Activated CD4-positive, alpha-beta memory T cell treated with anti-CD3 and anti-CD28 coated beads, Interleukin-2, amount 10 ng/mL, durations not matched to agents 7 days and 5 days (primary cell): ENCODE measurements at regions of chr18 and their contacts with region 1.

Region 1: GRCh38 chr18:46173393-46174341 is 69.5 kb downstream of the HAUS1 start:
- DNase-seq: peak; percentile 93
- H3K4me3 Mint-ChIP-seq: peak overlapping the region; percentile 99
- H3K27ac Mint-ChIP-seq: peak overlapping the region; percentile 98
- H3K4me1 Mint-ChIP-seq: peaks cover 60% of the 10 kb centered on the region
- H3K27me3 Mint-ChIP-seq: peaks cover 3% of the 10 kb centered on the region

Region 2: DNA sequence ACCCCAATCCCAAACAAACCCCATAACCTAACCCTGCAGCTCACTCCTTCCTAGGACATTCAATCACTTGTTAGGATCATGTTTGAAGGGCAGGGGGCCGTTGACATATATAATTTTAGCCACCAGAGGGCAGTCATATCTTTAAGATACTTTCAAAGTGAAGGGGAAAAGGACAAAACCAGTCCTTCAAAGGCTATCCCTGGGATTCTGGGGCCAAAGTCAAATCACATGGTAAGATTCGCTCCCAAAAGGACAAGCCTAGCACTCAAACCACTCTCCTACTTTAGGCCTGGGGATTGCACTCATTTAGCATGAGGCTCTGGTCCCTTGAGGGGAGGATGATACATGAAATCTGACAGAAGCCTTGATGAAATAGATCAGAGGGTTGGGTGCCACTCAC is 24.9 kb before region 1 on chr18:
- CTCF ChIA-PET with region 1: interaction called, 160 read pairs
- POLR2A ChIA-PET with region 1: interaction called, 128 read pairs
- DNase-seq: peak; percentile 60
- H3K4me3 Mint-ChIP-seq: no peak overlapping the region
- H3K27ac Mint-ChIP-seq: peak overlapping the region; percentile 45
- H3K4me1 Mint-ChIP-seq: peaks cover 34% of the 10 kb centered on the region
- H3K27me3 Mint-ChIP-seq: peaks cover 2% of the 10 kb centered on the region

Region 3: GRCh38 chr18:46161703-46162396 is 11.8 kb before region 1 on chr18:
- CTCF ChIA-PET with region 1: interaction called, 92 read pairs
- POLR2A ChIA-PET with region 1: interaction called, 128 read pairs
- DNase-seq: no peak
- H3K4me3 Mint-ChIP-seq: no peak overlapping the region
- H3K27ac Mint-ChIP-seq: no peak overlapping the region
- H3K4me1 Mint-ChIP-seq: peaks cover 43% of the 10 kb centered on the region
- H3K27me3 Mint-ChIP-seq: peaks cover 3% of the 10 kb centered on the region

Region 4: DNA sequence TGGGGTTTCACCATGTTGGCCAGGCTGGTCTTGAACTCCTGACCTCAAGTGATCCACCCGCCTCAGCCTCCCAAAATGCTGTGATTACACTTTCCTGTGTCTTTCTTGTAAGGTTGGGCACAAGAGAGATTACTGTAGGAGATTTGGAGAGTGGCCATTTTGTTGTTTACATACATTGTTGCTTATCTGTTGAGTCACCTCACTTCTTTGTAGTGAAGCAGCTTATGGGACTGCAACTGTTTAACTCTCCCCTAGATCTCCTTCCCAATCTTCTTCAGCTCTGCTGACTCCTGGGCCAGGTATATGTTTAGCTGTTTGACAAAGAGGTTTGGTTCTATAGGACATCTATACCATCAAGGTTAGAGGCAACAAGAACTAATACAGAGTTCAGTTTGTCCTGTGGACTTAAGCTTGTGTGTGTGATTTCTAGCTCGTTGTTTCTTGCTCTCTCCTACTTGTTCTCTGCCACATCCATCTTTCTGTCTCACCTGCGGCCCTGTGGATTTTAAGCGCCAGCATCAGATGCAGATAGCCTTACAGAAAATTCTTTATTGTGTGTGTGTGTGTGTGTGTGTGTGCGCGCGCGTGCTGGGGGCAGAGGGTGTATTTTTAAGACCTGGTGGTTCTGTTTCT is 26.0 kb after region 1 on chr18:
- CTCF ChIA-PET with region 1: interaction called, 20 read pairs
- POLR2A ChIA-PET with region 1: interaction called, 6 read pairs
- DNase-seq: peak; percentile 29
- H3K4me3 Mint-ChIP-seq: no peak overlapping the region
- H3K27ac Mint-ChIP-seq: peak overlapping the region; percentile 32
- H3K4me1 Mint-ChIP-seq: peaks cover 59% of the 10 kb centered on the region
- H3K27me3 Mint-ChIP-seq: no peaks in the 10 kb centered on the region

Region 5: GRCh38 chr18:46220116-46220515 is 46.4 kb after region 1 on chr18:
- CTCF ChIA-PET with region 1: interaction called, 133 read pairs
- POLR2A ChIA-PET with region 1: interaction called, 7 read pairs
- DNase-seq: no peak
- H3K4me3 Mint-ChIP-seq: no peak overlapping the region
- H3K27ac Mint-ChIP-seq: no peak overlapping the region
- H3K4me1 Mint-ChIP-seq: peaks cover 47% of the 10 kb centered on the region
- H3K27me3 Mint-ChIP-seq: no peaks in the 10 kb centered on the region

Region 6: GRCh38 chr18:46268671-46269070 is 95.0 kb after region 1 on chr18:
- CTCF ChIA-PET with region 1: interaction called, 14 read pairs
- POLR2A ChIA-PET with region 1: interaction called, 3 read pairs
- DNase-seq: no peak
- H3K4me3 Mint-ChIP-seq: no peak overlapping the region
- H3K27ac Mint-ChIP-seq: peak overlapping the region; percentile 59
- H3K4me1 Mint-ChIP-seq: peaks cover 50% of the 10 kb centered on the region
- H3K27me3 Mint-ChIP-seq: no peaks in the 10 kb centered on the region

Region 7: DNA sequence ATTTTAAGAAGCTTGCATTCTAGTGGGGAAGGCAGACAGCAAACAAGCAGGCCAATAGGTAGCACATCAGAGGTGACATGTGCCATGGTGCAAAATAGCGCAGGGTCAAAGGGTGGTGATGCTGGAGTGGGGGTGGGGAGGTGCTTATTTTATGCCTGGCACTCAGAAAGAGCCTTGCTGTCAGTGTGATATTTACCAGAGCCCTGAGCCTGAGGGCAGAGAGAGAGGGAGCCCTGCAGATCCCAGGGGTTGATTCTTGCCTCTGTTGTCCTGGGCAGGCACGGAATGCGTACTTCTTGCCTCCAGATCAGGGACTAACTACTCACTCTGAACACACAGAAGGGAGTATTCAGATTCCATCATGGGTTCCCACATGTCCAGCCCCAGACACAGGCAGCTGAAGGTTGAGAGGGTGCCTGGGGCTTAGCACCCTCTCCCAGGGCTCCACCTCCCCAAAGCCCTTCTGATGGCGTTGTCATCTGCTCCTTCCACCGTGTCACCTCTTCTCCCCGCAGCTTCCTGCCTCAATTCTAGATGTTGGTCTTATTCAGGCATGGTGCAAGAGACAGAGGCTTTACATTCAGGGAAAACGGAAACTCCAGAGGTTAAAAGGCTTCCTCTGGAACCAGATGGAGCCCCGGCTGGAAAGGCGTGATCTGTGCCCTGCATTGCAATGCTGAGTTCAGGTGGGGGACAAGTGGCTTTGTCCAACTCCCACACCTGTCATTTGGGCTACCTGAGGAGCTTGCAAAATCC is 182.8 kb after region 1 on chr18:
- CTCF ChIA-PET with region 1: no interaction called
- POLR2A ChIA-PET with region 1: no interaction called
- DNase-seq: no peak
- H3K4me3 Mint-ChIP-seq: no peak overlapping the region
- H3K27ac Mint-ChIP-seq: no peak overlapping the region
- H3K4me1 Mint-ChIP-seq: peaks cover 14% of the 10 kb centered on the region
- H3K27me3 Mint-ChIP-seq: no peaks in the 10 kb centered on the region

Region 8: DNA sequence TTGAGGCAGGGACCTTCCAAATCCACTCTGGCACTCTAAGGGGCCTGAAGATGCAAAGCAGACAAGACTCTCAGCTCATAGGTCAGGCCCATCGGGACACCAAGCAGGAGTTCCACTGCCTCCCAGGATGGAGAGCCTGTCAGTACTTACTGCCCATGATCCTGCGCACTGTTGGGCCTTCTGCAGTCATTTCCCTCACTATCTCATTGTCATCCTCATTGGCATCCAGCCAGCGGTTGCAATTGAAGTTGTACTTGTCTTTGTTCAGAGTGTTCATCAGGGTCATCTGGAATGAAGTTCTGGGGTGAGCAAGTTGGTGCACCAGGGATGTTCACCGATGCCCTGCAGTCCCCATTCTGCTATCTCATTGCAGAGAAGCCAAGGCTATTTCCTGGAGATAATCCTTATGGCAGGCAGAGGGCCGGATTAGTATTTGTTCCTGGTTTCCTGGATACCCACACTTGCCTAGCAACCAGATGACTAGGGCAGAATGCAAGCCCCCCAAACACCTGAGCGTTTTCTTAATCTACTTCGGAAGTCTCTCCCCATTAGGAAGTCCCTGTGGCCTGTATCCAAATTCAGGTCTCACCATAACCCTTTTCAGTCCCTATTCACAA is 418.2 kb after region 1 on chr18:
- CTCF ChIA-PET with region 1: no interaction called
- POLR2A ChIA-PET with region 1: no interaction called
- DNase-seq: no peak
- H3K4me3 Mint-ChIP-seq: no peak overlapping the region
- H3K27ac Mint-ChIP-seq: no peak overlapping the region
- H3K4me1 Mint-ChIP-seq: peaks cover 3% of the 10 kb centered on the region
- H3K27me3 Mint-ChIP-seq: peaks cover 37% of the 10 kb centered on the region

Region 9: DNA sequence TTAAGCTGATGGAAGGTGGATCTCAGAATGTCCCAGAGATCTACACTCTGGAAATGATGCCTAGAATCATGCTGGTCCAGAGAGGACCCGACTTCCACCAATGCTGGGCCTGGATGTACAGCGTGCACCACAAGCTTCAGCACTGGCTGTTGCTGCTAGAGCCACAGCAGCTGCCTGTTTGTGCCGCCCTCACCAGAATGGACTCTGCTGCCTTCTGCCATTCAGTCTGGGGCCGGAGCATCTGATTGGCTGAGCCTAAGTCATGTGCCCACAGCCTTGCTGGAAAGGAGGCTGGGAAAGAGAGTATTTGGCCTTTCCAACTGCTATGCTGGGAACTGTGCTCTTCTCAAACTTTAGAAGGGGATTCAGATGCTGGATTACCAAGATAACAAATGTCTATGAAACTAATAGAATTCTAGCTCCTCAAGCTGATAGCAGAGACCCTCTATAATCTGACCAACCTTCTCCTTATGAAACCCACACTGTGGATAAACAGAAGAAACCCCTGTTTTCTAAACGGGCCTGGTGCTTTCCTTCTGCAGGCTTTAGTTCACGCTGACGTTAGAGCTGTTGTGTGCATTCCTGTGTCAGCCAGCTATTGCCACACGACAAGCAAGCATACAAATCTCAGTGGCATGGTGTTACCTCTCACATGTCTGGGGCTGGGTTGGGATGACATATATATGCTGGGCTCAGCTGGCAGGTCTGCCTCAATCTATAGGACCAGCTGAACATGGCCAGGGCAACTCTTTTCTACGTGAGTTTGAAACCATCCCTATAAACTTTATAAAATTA is 487.5 kb after region 1 on chr18:
- CTCF ChIA-PET with region 1: interaction called, 44 read pairs
- POLR2A ChIA-PET with region 1: interaction called, 3 read pairs
- DNase-seq: no peak
- H3K4me3 Mint-ChIP-seq: no peak overlapping the region
- H3K27ac Mint-ChIP-seq: no peak overlapping the region
- H3K4me1 Mint-ChIP-seq: no peaks in the 10 kb centered on the region
- H3K27me3 Mint-ChIP-seq: peaks cover 4% of the 10 kb centered on the region